Activated B cell treated with CpG ODN at 0.5 μM for 24 hours (primary cell): ENCODE measurements at regions of chr18 and their contacts with region 1.

Region 1: DNA sequence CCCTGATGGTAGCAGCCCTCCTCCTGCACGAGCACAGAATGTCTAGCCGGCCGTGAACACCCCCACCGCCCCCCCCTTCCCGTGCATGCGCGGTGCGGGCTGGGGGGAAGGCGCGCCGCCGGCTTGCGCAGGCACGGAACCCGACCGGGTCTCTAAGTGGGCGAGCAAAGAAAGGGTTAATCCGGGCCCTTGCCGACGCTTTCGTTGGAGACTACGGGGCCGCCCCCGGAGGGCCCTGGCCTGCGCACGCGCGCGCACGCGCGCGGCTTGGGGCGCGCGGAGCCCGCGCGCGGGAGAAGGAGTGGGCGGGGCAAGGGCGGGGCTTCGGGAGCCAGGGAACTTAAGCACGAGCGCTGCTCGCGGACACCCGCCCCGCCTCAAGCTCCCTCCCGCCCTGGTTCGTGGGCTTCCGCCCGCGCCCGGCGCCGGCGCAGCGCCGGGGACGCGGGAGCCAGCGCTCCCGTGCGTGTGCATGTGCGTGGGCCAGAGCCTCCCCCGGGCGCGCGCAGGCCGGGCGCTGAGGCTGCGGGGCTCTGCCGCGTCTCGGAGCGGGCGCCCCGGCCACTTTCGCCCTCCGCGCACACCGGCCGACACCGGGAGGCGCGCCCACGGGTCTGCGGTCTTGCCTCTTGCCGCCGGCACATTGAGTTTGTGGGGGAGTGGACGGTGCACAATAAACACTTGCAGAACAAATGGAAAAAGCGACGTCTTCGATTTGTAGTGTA is 617 bp upstream of the ZBTB14 start:
- DNase-seq: peak; percentile 91
- ATAC-seq: peak; percentile 65
- H3K4me3 Mint-ChIP-seq: peak overlapping the region; percentile 95
- H3K27ac Mint-ChIP-seq: peak overlapping the region; percentile 97
- H3K4me1 Mint-ChIP-seq: peaks cover 29% of the 10 kb centered on the region
- H3K27me3 Mint-ChIP-seq: peaks cover 2% of the 10 kb centered on the region
- CTCF ChIP-seq: no peak

Region 2: DNA sequence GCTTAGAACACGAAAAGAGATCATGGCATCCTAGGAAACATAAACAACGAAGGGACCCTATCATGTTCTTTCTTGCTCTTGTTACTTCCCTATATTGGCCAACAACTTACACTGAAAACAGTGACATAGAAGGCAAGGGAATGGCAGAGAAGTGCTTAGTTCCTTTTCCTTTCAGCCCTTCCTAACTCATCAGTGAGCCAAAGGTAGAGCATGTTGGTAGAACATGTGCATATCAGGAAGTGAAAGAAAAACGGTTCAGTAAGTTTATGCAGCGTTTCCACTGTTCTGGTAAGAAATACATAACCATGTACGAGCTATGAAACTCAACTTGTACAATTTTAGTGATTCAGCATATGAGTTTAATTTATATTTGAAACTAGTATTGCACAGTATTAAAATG is 120.8 kb before region 1 on chr18:
- CTCF ChIA-PET with region 1: no interaction called
- POLR2A ChIA-PET with region 1: interaction called, 4 read pairs
- intact Hi-C with region 1: loop called (anchors 2 kb)
- DNase-seq: no peak
- ATAC-seq: peak; percentile 89
- H3K4me3 Mint-ChIP-seq: no peak overlapping the region
- H3K27ac Mint-ChIP-seq: peak overlapping the region; percentile 30
- H3K4me1 Mint-ChIP-seq: peaks cover 17% of the 10 kb centered on the region
- H3K27me3 Mint-ChIP-seq: no peaks in the 10 kb centered on the region
- CTCF ChIP-seq: no peak

Region 3: GRCh38 chr18:5309888-5310470 is 13.8 kb after region 1 on chr18:
- CTCF ChIA-PET with region 1: no interaction called
- POLR2A ChIA-PET with region 1: interaction called, 14 read pairs
- intact Hi-C with region 1: loop called (anchors 1 kb)
- DNase-seq: no peak
- ATAC-seq: peak; percentile 95
- H3K4me3 Mint-ChIP-seq: peak overlapping the region; percentile 69
- H3K27ac Mint-ChIP-seq: peak overlapping the region; percentile 85
- H3K4me1 Mint-ChIP-seq: peaks cover 17% of the 10 kb centered on the region
- H3K27me3 Mint-ChIP-seq: no peaks in the 10 kb centered on the region
- CTCF ChIP-seq: no peak

Region 4: GRCh38 chr18:5503740-5504139 is 207.6 kb after region 1 on chr18:
- CTCF ChIA-PET with region 1: no interaction called
- POLR2A ChIA-PET with region 1: no interaction called
- intact Hi-C with region 1: no loop called
- DNase-seq: no peak
- ATAC-seq: no peak
- H3K4me3 Mint-ChIP-seq: no peak overlapping the region
- H3K27ac Mint-ChIP-seq: no peak overlapping the region
- H3K4me1 Mint-ChIP-seq: no peaks in the 10 kb centered on the region
- H3K27me3 Mint-ChIP-seq: peaks cover 5% of the 10 kb centered on the region
- CTCF ChIP-seq: no peak

Region 5: GRCh38 chr18:6414118-6414722 is 1118.1 kb after region 1 on chr18:
- CTCF ChIA-PET with region 1: no interaction called
- POLR2A ChIA-PET with region 1: no interaction called
- intact Hi-C with region 1: loop called (anchors 2 kb)
- DNase-seq: peak; percentile 63
- ATAC-seq: peak; percentile 83
- H3K4me3 Mint-ChIP-seq: peak overlapping the region; percentile 75
- H3K27ac Mint-ChIP-seq: no peak overlapping the region
- H3K4me1 Mint-ChIP-seq: peaks cover 30% of the 10 kb centered on the region
- H3K27me3 Mint-ChIP-seq: peaks cover 8% of the 10 kb centered on the region
- CTCF ChIP-seq: no peak